ENCODE measurements at regions of chr12 and their contacts with region 1.

Region 1: DNA sequence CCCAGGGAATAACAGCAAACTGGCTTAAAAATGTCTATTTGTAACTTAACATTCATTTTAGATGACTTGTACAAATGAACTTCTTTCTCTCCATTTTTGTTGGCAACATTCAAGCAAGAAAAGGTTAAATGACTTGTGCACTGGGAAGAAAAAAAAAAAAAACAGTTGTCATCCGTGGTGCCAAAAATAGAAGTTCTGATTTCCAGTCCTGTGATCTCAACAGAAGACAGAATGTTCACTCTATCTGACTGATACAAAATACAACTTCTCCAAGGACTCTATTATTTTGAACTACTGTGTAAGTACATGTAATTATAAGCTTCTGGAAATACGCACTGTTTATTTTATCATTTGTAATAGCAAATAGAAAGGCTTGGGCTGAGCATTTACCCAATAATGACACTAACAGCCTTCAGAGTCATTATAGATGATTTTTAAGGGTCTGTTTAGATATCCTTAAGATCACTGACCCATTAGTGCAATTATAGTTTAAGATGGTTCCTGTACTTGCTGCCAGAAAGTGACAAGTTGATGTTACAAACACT is 59.9 kb downstream of the LIN7A start:
- DNase-seq: no peak
- ATAC-seq: peak; percentile 82

Region 2: GRCh38 chr12:79534062-79534867 is 1343.5 kb before region 1 on chr12:
- intact Hi-C with region 1: no loop called
- DNase-seq: no peak
- ATAC-seq: no peak

Region 3: GRCh38 chr12:80837348-80837985 is 40.3 kb before region 1 on chr12:
- intact Hi-C with region 1: loop called (anchors 5 kb)
- DNase-seq: no peak
- ATAC-seq: peak; percentile 88

Region 4: DNA sequence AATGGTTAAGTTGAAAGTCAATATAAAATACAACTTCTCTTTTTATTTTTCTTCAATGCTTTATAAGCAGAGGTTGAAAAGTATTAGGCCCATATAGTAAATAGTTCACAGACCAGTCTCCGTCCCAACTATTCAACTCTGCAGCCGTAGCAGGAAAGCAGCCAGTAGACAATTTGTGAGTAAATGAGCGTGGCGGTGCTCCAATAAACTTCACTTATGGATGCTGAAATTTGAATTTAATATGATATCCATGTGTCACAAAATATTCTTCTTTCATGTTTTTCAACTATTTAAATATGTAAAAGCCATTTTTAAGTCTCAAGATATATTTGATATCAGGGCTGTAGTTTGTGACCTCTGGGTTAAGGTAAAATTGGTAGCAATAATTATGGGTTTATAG is 42.2 kb after region 1 on chr12:
- intact Hi-C with region 1: loop called (anchors 5 kb)
- DNase-seq: no peak
- ATAC-seq: no peak

Region 5: GRCh38 chr12:80936498-80937390 is 59.0 kb after region 1 on chr12:
- intact Hi-C with region 1: loop called (anchors 5 kb)
- DNase-seq: peak; percentile 73
- ATAC-seq: peak; percentile 85

Measured in Right ventricle myocardium inferior (tissue), 1 donor.